ENCODE measurements at regions of chr1 and their contacts with region 1.

Region 1: GRCh38 chr1:214584805-214585766 is 17.9 kb upstream of the CENPF start:
- DNase-seq: peak; percentile 31
- ATAC-seq: peak; percentile 80
- H3K4me3 ChIP-seq: no peak overlapping the region
- H3K27ac ChIP-seq: no peak overlapping the region
- H3K4me1 ChIP-seq: no peaks in the 10 kb centered on the region
- H3K27me3 ChIP-seq: peaks cover 2 to 4% of the 10 kb centered on the region in 2 experiments; a peak in 1 of 5 replicates
- CTCF ChIP-seq: peak; percentile 68
- EP300 ChIP-seq: no peak
- POLR2A ChIP-seq: no peak
- RAD21 ChIP-seq: peak; percentile 56; the same call in 1 of the 2 replicates

Region 2: DNA sequence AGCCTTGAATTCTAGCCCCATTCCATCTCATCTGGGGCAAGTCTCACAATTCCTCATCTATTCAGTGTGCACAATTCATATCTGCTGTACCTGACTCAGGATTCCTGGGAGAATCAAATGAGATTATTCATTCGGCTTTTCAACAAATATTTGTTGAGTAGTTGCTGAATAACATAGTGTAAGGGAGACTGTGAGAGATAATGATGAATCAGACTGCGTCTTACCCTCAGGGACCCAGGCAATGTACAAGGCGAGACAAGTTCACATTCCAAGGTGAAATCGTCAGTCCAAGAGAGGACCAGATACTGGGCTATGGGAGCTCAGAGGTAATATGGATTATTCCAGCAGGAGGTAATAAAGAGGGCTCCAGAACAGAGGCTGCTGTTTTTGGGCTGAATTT is 371.9 kb before region 1 on chr1:
- CTCF ChIA-PET with region 1: no interaction called
- POLR2A ChIA-PET with region 1: no interaction called
- in situ Hi-C with region 1: loop called (anchors 10 kb)
- intact Hi-C with region 1: loop called (anchors 10 kb)
- DNase-seq: no peak
- ATAC-seq: no peak
- H3K4me3 ChIP-seq: no peak overlapping the region
- H3K27ac ChIP-seq: no peak overlapping the region
- H3K4me1 ChIP-seq: peaks cover 20% of the 10 kb centered on the region
- H3K27me3 ChIP-seq: peaks cover 0 to 10% of the 10 kb centered on the region in 2 experiments; a peak in 2 of 5 replicates
- CTCF ChIP-seq: no peak
- EP300 ChIP-seq: no peak
- POLR2A ChIP-seq: no peak
- RAD21 ChIP-seq: no peak

Region 3: DNA sequence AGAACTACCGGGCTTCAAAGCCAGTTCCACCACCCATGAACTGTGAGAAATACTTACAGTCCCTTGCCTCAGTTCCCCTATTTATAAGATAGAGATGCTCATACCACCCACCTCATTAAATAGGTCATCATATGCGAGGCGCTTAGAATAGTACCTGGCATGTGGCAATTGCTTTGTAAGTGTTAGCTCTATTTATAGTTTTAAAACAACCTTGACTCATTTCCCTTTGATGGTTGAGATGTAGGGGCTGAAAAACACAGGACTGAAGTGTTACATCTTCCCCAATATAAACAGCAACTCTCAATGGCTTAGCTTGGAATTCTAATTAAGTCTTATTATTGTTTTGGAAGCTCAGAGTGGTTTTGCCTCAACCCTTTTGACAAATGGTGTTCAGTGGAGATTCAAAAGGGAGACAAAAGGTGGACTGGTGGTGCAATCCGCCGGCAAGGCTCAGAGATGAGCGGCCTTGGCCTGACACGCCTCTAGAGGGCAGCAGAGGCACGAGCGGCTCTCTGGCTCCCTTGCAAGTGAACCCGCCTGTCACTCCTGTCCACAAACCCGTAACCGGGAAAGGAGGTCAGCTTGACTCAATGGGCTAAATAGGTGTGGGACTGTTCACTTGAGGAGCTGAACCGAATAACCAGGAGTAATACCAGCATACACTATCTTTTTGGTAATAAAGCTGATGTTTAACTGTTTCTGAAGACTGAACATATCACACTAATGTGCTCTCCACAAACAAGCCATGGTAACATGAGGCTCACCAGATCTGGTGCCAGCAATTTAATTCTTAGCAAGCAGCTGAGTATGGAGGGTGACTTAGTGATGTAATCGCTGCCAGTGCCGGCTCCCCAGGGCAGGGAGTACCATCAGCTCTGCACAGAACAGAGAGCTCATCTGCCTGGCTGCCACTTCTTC is 323.6 kb before region 1 on chr1:
- CTCF ChIA-PET with region 1: no interaction called
- POLR2A ChIA-PET with region 1: no interaction called
- in situ Hi-C with region 1: no loop called
- intact Hi-C with region 1: loop called (anchors 5 kb)
- DNase-seq: peak; percentile 52
- ATAC-seq: peak; percentile 99
- H3K4me3 ChIP-seq: no peak overlapping the region
- H3K27ac ChIP-seq: no peak overlapping the region
- H3K4me1 ChIP-seq: peaks cover 18% of the 10 kb centered on the region; the same call in 1 of the 2 replicates
- H3K27me3 ChIP-seq: peaks cover 0 to 14% of the 10 kb centered on the region in 2 experiments; a peak in 2 of 5 replicates
- CTCF ChIP-seq: peak; percentile 98
- EP300 ChIP-seq: no peak
- POLR2A ChIP-seq: no peak
- RAD21 ChIP-seq: peak; percentile 93

Region 4: GRCh38 chr1:214328770-214329469 is 256.2 kb before region 1 on chr1:
- CTCF ChIA-PET with region 1: interaction called, 29 read pairs
- POLR2A ChIA-PET with region 1: no interaction called
- in situ Hi-C with region 1: loop called (anchors 10 kb)
- intact Hi-C with region 1: loop called (anchors 1 kb)
- DNase-seq: peak; percentile 65
- ATAC-seq: peak; percentile 91
- H3K4me3 ChIP-seq: no peak overlapping the region
- H3K27ac ChIP-seq: no peak overlapping the region
- H3K4me1 ChIP-seq: no peaks in the 10 kb centered on the region
- H3K27me3 ChIP-seq: no peaks in the 10 kb centered on the region
- CTCF ChIP-seq: peak; percentile 95
- EP300 ChIP-seq: no peak
- POLR2A ChIP-seq: no peak
- RAD21 ChIP-seq: peak; percentile 96

Region 5: DNA sequence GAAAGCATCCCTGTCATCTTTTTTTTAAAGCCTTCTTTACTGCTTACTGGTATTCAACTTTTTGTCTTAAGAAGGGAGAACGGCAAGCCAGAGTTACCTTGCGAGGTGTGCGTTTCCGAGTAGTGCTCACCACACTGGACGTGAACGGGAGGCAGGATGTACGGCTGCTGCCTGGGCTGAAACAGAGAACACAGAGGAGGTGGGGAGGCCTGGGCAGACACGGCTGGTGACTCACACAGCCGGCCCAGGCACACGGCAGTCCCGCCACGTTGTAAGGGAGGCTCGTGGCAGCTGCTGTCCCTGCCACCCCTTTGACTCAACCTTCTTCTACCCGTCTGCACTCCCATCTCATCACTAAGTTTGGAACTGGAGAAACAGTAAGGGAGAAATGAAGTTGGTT is 198.3 kb before region 1 on chr1:
- CTCF ChIA-PET with region 1: interaction called, 18 read pairs
- POLR2A ChIA-PET with region 1: no interaction called
- in situ Hi-C with region 1: loop called (anchors 5 kb)
- intact Hi-C with region 1: loop called (anchors 1 kb)
- DNase-seq: no peak
- ATAC-seq: no peak
- H3K4me3 ChIP-seq: no peak overlapping the region
- H3K27ac ChIP-seq: no peak overlapping the region
- H3K4me1 ChIP-seq: no peaks in the 10 kb centered on the region
- H3K27me3 ChIP-seq: no peaks in the 10 kb centered on the region
- CTCF ChIP-seq: no peak
- EP300 ChIP-seq: no peak
- POLR2A ChIP-seq: no peak
- RAD21 ChIP-seq: no peak

Region 6: DNA sequence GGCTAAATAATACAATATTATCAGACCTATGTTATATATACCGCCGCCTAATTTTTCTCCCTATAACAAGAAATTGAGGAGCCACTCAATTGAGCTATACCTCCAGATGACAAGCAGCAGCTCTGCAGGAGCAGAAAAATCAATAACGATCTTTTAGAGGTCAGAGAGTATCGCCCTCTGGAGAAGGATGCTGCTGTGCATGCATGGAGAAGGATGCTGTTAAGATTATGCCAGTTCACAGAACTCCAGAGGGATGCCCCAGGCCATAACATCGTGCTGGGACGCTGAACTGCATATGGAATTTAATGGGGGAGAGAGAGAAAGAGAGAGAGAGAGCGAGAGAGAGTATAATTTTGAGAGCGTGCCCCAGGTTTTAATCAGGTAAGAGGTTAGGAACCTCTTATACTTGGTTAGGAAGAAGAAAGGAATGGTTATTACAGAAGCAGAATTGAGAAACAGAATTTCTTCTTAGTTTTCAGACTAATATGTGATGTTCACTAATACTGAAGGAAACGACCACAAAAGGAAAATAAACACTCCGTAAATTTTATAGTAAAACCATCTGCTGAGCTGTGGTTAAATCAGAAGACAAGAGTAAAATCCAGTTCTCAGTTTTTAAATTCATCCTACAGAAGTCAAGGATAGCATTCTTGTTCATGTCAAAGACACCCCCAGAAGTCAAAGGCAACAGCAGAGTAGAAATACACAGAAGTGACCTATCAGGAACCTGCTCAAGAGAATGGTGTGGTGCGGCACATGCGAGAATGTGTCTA is 193.0 kb before region 1 on chr1:
- CTCF ChIA-PET with region 1: interaction called, 18 read pairs
- POLR2A ChIA-PET with region 1: no interaction called
- in situ Hi-C with region 1: loop called (anchors 5 kb)
- intact Hi-C with region 1: loop called (anchors 1 kb)
- DNase-seq: no peak
- ATAC-seq: no peak
- H3K4me3 ChIP-seq: no peak overlapping the region
- H3K27ac ChIP-seq: no peak overlapping the region
- H3K4me1 ChIP-seq: no peaks in the 10 kb centered on the region
- H3K27me3 ChIP-seq: no peaks in the 10 kb centered on the region
- CTCF ChIP-seq: no peak
- EP300 ChIP-seq: no peak
- POLR2A ChIP-seq: no peak
- RAD21 ChIP-seq: no peak

Region 7: DNA sequence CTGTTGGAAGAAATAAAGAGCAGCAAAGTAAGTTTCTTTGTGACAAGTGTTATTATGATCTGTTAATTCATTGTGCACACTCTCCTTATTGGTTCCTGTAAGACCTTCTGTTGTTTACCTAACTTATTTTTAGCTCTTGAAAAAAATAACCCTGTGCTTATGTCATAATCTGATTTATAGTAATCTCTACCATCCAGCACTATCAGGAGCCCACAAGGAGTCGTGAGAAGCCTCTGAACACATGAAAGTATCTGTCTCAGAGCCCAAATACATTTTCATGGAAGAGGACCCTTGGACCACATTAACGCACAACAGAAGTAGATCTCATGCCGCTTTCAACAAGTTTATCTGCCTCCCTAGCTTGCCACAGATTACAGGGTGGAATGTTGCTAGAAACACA is 63.7 kb after region 1 on chr1:
- CTCF ChIA-PET with region 1: no interaction called
- POLR2A ChIA-PET with region 1: no interaction called
- in situ Hi-C with region 1: no loop called
- intact Hi-C with region 1: no loop called
- DNase-seq: no peak
- ATAC-seq: no peak
- H3K4me3 ChIP-seq: no peak overlapping the region
- H3K27ac ChIP-seq: no peak overlapping the region
- H3K4me1 ChIP-seq: no peaks in the 10 kb centered on the region
- H3K27me3 ChIP-seq: no peaks in the 10 kb centered on the region
- CTCF ChIP-seq: no peak
- EP300 ChIP-seq: no peak
- POLR2A ChIP-seq: no peak
- RAD21 ChIP-seq: no peak

Measured in HepG2 (cell line).